ENCODE measurements at regions of chrX and their contacts with region 1.

Region 1: GRCh38 chrX:119067023-119067739 is 5.6 kb upstream of the CT47C1 start:
- DNase-seq: peak; percentile 15
- H3K4me3 ChIP-seq: no peak overlapping the region
- H3K27ac ChIP-seq: no peak overlapping the region
- H3K27me3 ChIP-seq: no peaks in the 10 kb centered on the region
- CTCF ChIP-seq: peak; percentile 69

Region 2: GRCh38 chrX:118508635-118509034 is 558.5 kb before region 1 on chrX:
- CTCF ChIA-PET with region 1: no interaction called
- POLR2A ChIA-PET with region 1: no interaction called
- DNase-seq: no peak
- H3K4me3 ChIP-seq: no peak overlapping the region
- H3K27ac ChIP-seq: no peak overlapping the region
- H3K27me3 ChIP-seq: no peaks in the 10 kb centered on the region
- CTCF ChIP-seq: no peak

Region 3: DNA sequence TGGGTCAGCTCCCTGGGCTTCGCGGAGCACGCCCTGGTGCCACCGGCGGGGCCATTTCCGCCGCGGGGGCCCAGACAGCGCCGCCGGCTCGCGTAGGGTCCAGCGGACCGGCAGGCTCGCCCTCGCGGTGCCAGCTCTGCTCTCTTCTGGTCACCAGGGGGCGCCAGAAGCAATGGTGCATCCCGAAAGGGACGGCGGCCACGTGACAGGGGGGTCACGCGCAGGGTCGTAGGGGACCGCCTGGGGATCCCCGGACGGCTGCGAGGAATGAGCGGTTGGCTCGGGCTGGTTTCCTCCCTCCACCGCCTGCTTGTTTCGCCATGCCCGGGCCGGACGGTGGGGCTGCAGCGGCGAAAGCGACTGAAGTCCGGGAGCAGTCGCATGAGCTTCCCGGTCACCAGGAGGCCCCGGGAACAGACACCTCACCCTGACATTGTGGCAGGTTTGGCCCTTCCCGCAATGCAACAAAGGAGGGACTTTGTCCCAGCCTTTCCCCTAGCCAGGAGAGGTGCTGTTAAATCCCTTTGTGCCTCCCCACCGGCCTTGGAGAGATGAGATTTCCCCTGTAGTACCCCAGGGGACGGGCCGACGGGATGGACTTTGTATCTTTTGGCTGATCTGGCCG is 227.7 kb before region 1 on chrX:
- CTCF ChIA-PET with region 1: interaction called, 15 read pairs
- POLR2A ChIA-PET with region 1: no interaction called
- DNase-seq: no peak
- H3K4me3 ChIP-seq: peak overlapping the region; percentile 52
- H3K27ac ChIP-seq: no peak overlapping the region
- H3K27me3 ChIP-seq: no peaks in the 10 kb centered on the region
- CTCF ChIP-seq: peak; percentile 55

Region 4: DNA sequence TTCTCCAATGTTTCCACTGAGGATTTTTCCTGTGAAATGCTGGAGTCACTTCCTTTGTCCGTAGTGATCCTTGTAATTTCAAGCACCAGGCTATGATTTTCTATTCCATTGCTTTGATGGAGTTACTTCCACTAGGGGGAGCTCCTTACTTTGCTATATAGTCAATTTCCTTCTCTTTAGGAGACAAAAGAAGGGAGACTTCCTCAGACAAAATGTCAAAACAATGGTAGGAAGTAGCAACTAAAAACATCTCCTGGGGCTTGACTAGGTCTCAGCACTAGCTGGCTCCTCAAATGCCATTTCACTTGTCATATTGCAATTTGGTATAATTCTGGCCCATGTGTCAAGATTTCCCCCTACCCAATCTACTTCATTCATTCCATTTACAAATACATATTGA is 219.5 kb before region 1 on chrX:
- CTCF ChIA-PET with region 1: interaction called, 21 read pairs
- POLR2A ChIA-PET with region 1: no interaction called
- DNase-seq: no peak
- H3K4me3 ChIP-seq: no peak overlapping the region
- H3K27ac ChIP-seq: no peak overlapping the region
- H3K27me3 ChIP-seq: no peaks in the 10 kb centered on the region
- CTCF ChIP-seq: peak; percentile 63

Region 5: DNA sequence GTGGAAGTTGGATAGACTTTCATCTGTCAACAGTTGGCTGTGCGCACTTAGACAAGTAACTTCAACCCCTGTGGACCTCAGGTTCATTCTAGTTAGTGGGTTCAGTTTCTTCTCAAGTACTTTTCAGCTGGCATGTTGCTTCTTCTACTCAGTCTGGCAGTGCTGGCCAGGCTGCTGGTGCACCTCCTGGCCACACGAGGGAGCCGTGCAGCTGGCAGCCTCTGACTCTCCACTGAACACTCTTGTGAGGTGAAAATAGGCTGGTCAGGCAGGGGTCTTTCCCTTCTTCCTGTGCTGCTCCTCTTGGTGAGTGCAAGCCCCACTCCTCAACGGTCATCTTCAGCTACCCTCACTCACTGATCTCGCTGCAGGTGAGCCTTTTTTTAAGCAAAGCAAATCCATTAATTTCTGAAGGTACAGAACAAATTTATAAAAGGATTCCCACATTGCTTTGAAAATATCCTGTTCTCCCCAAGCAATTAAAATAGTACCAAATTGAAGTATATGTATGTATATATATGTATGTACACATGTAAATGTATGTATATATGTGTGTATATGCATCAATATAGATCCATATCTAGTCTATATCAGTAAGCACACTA is 62.2 kb before region 1 on chrX:
- CTCF ChIA-PET with region 1: interaction called, 48 read pairs
- POLR2A ChIA-PET with region 1: no interaction called
- DNase-seq: no peak
- H3K4me3 ChIP-seq: no peak overlapping the region
- H3K27ac ChIP-seq: no peak overlapping the region
- H3K27me3 ChIP-seq: peaks cover 4% of the 10 kb centered on the region
- CTCF ChIP-seq: peak; percentile 84

Region 6: DNA sequence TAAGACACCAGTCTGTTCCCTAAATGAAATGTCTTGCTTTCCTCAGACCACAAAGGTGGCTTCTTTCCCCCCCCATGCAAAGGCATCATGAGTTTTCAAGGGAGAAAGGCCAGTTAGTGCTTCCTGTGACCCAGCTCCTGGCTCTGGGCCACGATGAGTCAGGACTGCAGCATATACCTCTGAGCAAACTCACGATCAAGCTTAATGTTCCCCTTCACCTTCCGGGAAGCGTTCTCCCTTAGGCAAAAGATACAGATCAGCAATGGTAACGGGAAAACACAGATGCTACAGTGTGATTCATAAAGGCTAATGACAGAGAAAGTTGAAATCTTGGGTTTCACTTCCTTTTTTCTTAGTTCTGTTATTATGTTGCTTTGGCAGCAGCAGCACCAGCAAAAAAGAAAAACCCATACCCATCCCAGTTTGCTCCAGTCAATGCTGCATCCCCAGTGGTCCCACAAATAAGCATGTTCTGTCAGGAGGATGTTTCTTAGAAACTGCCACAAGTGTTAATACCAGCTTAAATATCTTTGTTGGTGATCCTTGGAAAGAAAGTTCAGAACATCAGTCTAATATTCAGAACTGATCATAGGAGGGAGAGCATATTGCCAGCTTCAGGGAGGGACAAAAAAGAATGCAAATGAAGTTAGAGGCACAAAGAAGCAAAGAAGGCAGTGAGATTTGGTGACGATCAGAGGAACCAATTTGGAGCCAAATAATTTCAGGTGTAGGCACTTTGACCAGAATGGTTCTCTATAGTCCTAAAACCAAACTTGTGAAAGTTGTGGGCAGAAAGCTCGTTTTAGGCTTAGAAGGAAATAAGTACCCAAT is 51.6 kb before region 1 on chrX:
- CTCF ChIA-PET with region 1: interaction called, 10 read pairs
- POLR2A ChIA-PET with region 1: no interaction called
- DNase-seq: peak; percentile 41
- H3K4me3 ChIP-seq: no peak overlapping the region
- H3K27ac ChIP-seq: no peak overlapping the region
- H3K27me3 ChIP-seq: no peaks in the 10 kb centered on the region
- CTCF ChIP-seq: no peak

Region 7: GRCh38 chrX:119055687-119056086 is 11.5 kb before region 1 on chrX:
- CTCF ChIA-PET with region 1: interaction called, 20 read pairs
- POLR2A ChIA-PET with region 1: no interaction called
- DNase-seq: no peak
- H3K4me3 ChIP-seq: no peak overlapping the region
- H3K27ac ChIP-seq: no peak overlapping the region
- H3K27me3 ChIP-seq: peaks cover 4% of the 10 kb centered on the region
- CTCF ChIP-seq: no peak

Region 8: DNA sequence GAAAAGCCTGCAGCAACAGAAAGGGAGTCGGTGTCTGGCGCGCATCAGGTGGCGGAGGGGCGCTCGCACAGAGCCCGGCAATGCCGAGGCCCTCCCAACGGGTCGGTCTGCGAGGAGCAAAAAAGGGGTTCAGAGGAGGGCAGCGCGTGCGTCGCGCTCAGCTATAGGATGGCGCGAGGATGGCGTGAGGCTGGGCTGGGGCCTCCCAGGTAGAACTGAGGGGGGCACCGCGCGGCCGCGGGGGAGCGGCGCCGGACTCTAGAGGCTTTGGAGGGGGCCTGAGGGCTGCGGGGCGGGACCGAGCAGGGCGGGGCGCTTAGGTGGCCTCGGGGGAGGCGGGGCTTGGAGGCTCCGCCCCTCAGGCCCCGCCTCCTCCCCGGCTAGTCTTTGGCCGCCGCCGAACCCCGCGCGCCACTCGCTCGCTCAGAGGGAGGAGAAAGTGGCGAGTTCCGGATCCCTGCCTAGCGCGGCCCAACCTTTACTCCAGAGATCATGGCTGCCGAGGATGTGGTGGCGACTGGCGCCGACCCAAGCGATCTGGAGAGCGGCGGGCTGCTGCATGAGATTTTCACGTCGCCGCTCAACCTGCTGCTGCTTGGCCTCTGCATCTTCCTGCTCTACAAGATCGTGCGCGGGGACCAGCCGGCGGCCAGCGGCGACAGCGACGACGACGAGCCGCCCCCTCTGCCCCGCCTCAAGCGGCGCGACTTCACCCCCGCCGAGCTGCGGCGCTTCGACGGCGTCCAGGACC is 168.9 kb after region 1 on chrX and contains the start of gene PGRMC1:
- CTCF ChIA-PET with region 1: no interaction called
- POLR2A ChIA-PET with region 1: no interaction called
- DNase-seq: peak; percentile 41
- H3K4me3 ChIP-seq: peak within 1 kb of the TSS; percentile 74
- H3K27ac ChIP-seq: peak within 1 kb of the TSS; percentile 39
- H3K27me3 ChIP-seq: peaks cover 4% of the 10 kb centered on the region
- CTCF ChIP-seq: no peak
- polyA plus RNA-seq, gene PGRMC1: 76.5 and 110 TPM in 2 replicates

Measured in AG04450 (cell line).